Left ventricle myocardium superior (tissue), 1 donor: ENCODE measurements at regions of chr16 and their contacts with region 1.

Region 1: GRCh38 chr16:69396187-69397061 is 10.6 kb upstream of the TERF2 start:
- DNase-seq: no peak
- ATAC-seq: peak; percentile 46

Region 2: DNA sequence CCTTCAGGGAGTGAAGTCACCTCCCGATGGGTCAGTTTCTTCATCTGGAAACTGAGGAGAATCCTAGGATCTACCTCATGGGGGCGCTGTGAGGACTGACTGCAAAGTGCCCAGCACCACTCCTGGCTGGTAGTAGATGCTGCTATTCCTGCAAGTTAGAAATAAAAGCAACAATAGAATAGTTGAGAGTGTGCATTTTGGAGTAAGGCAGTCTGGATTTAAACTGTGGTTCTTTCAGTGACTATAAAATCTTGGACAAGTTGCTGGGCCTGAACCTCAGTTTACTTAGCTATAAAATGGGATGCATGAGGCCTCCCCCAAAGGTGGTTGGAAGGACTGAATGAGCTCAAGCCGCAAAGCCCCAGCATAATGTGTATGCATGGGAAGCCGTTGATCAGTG is 98.6 kb after region 1 on chr16:
- intact Hi-C with region 1: no loop called
- DNase-seq: no peak
- ATAC-seq: no peak

Region 3: DNA sequence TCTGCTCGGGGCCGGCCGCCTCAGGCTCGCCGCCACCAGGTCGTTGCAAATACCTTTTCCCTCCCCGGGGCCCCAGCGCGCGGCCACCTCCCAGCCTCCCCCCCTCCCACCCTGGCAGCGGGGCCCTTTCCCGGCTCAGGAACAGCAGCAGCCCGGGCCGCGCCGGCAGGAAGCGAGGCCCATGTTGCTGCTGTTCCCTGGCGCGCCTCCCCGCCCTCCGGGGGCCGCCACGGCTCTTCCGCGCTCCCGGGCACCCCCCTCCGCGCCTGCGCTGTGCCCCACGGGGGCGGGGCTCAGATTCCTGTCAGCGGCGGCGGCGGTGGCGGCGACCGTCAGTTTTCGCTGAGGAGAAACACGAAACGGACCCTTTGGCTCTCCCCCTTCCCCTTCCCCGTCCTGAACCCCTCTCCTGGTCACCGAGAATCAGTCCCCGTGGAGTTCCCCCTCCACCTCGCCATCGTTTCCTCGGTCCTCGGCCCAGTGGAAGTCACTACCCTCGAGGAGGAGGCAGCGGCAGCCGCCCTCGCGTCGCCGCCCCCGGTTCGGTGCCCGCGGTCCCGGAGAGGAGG is 169.3 kb after region 1 on chr16 and contains the start of gene NFAT5:
- intact Hi-C with region 1: loop called (anchors 10 kb)
- DNase-seq: peak; percentile 94
- ATAC-seq: peak; percentile 91
- total RNA-seq, gene NFAT5: 14.3 TPM